WTC11 (cell line): ENCODE measurements at regions of chr3 and their contacts with region 1.

Region 1: GRCh38 chr3:187738331-187739093 is 6.8 kb downstream of the BCL6 start:
- DNase-seq: peak; percentile 86
- ATAC-seq: peak; percentile 59
- H3K4me3 Mint-ChIP-seq: peak overlapping the region; percentile 82
- H3K27ac Mint-ChIP-seq: peak overlapping the region; percentile 93
- H3K4me1 Mint-ChIP-seq: peaks cover 48% of the 10 kb centered on the region
- H3K27me3 Mint-ChIP-seq: peaks cover 32% of the 10 kb centered on the region
- CTCF ChIP-seq: 0 out of 2 replicates have a peak, but pooled peaks have one; percentile 16

Region 2: GRCh38 chr3:187565701-187566100 is 172.8 kb before region 1 on chr3:
- CTCF ChIA-PET with region 1: no interaction called
- POLR2A ChIA-PET with region 1: no interaction called
- DNase-seq: no peak
- ATAC-seq: no peak
- H3K4me3 Mint-ChIP-seq: no peak overlapping the region
- H3K27ac Mint-ChIP-seq: no peak overlapping the region
- H3K4me1 Mint-ChIP-seq: peaks cover 46% of the 10 kb centered on the region
- H3K27me3 Mint-ChIP-seq: no peaks in the 10 kb centered on the region; the same call in 1 of the 2 replicates
- CTCF ChIP-seq: no peak

Region 3: GRCh38 chr3:187777331-187777941 is 38.9 kb after region 1 on chr3:
- CTCF ChIA-PET with region 1: no interaction called
- POLR2A ChIA-PET with region 1: no interaction called
- DNase-seq: no peak
- ATAC-seq: no peak
- H3K4me3 Mint-ChIP-seq: no peak overlapping the region
- H3K27ac Mint-ChIP-seq: no peak overlapping the region
- H3K4me1 Mint-ChIP-seq: peaks cover 20% of the 10 kb centered on the region
- H3K27me3 Mint-ChIP-seq: no peaks in the 10 kb centered on the region
- CTCF ChIP-seq: no peak

Region 4: GRCh38 chr3:187935623-187936156 is 197.2 kb after region 1 on chr3:
- CTCF ChIA-PET with region 1: interaction called, 10 read pairs
- POLR2A ChIA-PET with region 1: no interaction called
- DNase-seq: no peak
- ATAC-seq: no peak
- H3K4me3 Mint-ChIP-seq: no peak overlapping the region
- H3K27ac Mint-ChIP-seq: no peak overlapping the region
- H3K4me1 Mint-ChIP-seq: peaks cover 3% of the 10 kb centered on the region; the same call in 1 of the 2 replicates
- H3K27me3 Mint-ChIP-seq: no peaks in the 10 kb centered on the region; the same call in none of the 2 replicates
- CTCF ChIP-seq: no peak

Region 5: DNA sequence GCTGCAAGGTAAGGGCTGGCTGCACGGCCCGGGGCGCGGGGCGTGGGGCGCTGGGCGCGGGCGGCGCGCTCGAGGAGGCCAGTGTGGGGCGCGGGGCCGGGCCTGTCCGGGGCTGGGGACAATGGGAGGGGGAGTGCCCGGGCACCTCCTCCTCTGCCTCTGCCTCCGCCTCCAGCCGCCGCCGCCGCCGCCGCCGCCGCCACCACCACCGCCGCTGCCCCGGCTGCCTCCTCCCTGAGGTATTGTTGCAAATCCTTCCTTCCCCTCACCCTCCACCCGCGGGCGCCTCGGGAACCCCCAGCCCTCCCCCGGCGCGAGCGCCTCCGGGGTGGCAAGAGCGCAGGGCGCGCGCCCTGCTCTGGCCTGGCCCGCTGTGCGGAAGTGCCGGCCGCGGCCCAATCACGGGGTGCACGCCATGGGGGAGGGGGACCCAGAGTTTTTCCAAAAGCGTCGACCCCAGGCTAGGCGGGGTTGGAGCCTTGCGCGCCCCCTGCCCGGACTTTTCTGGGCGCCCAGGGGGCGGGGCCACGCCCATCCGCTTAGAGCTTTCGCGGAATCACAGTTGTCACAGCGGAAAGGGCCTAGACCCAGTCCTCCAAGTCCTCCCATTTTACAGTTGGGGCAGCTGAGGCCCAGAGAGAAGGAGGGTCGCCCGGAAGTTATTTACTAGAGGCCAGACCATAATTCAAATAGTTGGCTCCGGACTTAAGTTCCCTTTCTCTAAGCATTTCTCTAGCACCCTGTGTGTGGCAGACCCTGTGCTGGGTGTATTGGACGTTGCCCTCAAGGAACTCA is 415.7 kb after region 1 on chr3 and contains the start of gene LPP:
- CTCF ChIA-PET with region 1: interaction called, 38 read pairs
- POLR2A ChIA-PET with region 1: interaction called, 25 read pairs
- DNase-seq: peak; percentile 75
- ATAC-seq: peak; percentile 76
- H3K4me3 Mint-ChIP-seq: peak within 1 kb of the TSS; percentile 97
- H3K27ac Mint-ChIP-seq: peak within 1 kb of the TSS; percentile 99
- H3K4me1 Mint-ChIP-seq: peaks cover 56% of the 10 kb centered on the region
- H3K27me3 Mint-ChIP-seq: peaks cover 5% of the 10 kb centered on the region
- CTCF ChIP-seq: no peak
- total RNA-seq, gene LPP: 49.2 to 55.6 TPM (median 49.6 TPM) in 3 replicates

Region 6: DNA sequence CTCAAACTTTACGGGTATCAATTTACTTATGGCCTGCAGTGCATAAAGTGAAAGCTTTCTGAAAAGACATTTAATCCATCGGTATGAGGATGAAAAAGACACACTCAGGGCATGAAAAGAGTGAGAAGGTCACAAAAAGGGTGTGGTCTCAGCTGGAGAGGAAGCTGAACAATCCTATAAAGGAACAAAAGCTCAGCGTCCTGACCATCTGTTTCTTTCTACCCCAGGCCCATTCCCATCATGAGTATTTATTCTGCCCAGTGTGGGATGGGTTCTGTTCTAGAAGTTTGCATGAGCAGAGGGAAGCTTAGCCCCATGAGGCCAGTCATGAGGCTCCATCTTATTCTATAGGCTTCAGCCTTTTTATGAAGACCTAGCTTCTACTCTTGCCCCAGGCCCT is 560.1 kb after region 1 on chr3:
- CTCF ChIA-PET with region 1: interaction called, 10 read pairs
- POLR2A ChIA-PET with region 1: no interaction called
- DNase-seq: no peak
- ATAC-seq: peak; percentile 59
- H3K4me3 Mint-ChIP-seq: no peak overlapping the region
- H3K27ac Mint-ChIP-seq: no peak overlapping the region
- H3K4me1 Mint-ChIP-seq: peaks cover 58% of the 10 kb centered on the region
- H3K27me3 Mint-ChIP-seq: no peaks in the 10 kb centered on the region
- CTCF ChIP-seq: no peak

Region 7: DNA sequence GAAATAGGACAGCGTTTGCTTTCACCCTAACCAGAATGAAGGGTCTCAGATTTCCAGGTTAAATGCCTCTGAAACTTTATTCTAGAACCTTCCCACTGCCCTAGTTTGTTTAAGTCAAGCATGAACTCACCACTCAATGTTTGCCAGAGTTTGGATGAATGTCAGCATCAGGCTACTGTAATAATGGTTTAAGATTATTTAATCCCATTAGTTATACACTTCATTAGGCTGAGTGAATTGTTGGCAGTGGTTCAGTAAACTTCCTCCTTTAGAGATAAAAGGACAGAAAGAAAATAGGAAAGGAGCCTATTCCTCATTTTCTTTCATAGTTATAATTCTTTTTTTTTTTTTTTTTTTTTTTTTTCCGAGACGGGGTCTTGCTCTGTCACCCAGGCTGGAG is 1031.3 kb after region 1 on chr3:
- CTCF ChIA-PET with region 1: no interaction called
- POLR2A ChIA-PET with region 1: interaction called, 10 read pairs
- DNase-seq: no peak
- ATAC-seq: no peak
- H3K4me3 Mint-ChIP-seq: no peak overlapping the region
- H3K27ac Mint-ChIP-seq: no peak overlapping the region; the same call in 1 of the 2 replicates
- H3K4me1 Mint-ChIP-seq: peaks cover 4% of the 10 kb centered on the region
- H3K27me3 Mint-ChIP-seq: no peaks in the 10 kb centered on the region
- CTCF ChIP-seq: no peak

Region 8: GRCh38 chr3:188954590-188955208 is 1216.2 kb after region 1 on chr3:
- CTCF ChIA-PET with region 1: interaction called, 132 read pairs
- POLR2A ChIA-PET with region 1: interaction called, 12 read pairs
- DNase-seq: peak; percentile 83
- ATAC-seq: peak; percentile 93
- H3K4me3 Mint-ChIP-seq: no peak overlapping the region
- H3K27ac Mint-ChIP-seq: no peak overlapping the region
- H3K4me1 Mint-ChIP-seq: peaks cover 11% of the 10 kb centered on the region
- H3K27me3 Mint-ChIP-seq: no peaks in the 10 kb centered on the region
- CTCF ChIP-seq: peak; percentile 95